A673 (cell line): ENCODE measurements at regions of chr15 and their contacts with region 1.

Region 1: DNA sequence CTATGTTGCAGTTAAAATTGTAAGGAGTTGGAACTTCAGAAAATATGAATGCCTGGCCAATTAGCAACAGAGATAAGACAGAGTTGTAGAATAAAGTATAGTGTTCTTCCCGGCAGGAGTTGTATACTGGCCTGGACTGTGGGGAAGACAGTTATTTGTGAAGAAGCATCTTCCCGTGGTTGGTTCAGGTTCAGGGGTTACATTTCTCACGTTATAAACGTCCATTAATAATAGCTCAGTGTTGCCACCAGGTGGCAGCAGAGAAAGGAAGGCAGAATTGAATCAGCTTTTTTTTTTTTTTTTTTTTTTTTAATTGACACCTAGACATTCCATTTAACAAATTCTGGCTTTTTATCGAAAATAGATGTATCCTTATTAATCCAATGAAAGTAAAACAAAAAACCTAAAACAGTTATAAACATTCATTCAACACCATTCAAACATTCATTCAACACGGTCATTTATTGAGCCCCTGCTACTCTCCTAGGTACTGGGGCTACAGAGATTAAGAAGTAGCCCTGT is 66.4 kb upstream of the NR2E3 start:
- DNase-seq: peak; percentile 68
- H3K4me3 ChIP-seq: no peak overlapping the region
- H3K27ac ChIP-seq: no peak overlapping the region
- H3K4me1 ChIP-seq: no peaks in the 10 kb centered on the region
- H3K27me3 ChIP-seq: no peaks in the 10 kb centered on the region
- CTCF ChIP-seq: peak; percentile 81

Region 2: DNA sequence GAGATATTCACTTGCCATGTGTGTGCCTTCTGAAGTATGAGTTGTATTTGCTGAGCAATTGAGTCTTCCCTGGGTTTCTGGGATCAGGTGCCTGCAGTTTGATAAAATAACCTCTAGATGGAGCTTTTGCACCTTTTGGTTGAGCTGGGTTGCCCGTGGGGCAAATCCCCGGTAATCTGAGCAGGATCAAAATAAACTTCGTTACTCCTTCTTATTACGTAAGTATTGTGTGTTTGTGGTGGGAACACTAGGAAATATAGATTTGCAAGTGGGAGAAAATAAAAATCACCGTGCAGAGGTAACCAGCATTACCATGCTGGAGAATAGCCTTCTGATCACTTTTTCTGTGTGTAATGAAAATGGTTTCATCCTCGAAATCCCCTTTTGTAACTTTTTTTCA is 210.9 kb before region 1 on chr15:
- CTCF ChIA-PET with region 1: interaction called, 10 read pairs
- POLR2A ChIA-PET with region 1: no interaction called
- intact Hi-C with region 1: no loop called
- DNase-seq: peak; percentile 50
- H3K4me3 ChIP-seq: no peak overlapping the region
- H3K27ac ChIP-seq: no peak overlapping the region
- H3K4me1 ChIP-seq: no peaks in the 10 kb centered on the region
- H3K27me3 ChIP-seq: peaks cover 37% of the 10 kb centered on the region
- CTCF ChIP-seq: peak; percentile 80

Region 3: DNA sequence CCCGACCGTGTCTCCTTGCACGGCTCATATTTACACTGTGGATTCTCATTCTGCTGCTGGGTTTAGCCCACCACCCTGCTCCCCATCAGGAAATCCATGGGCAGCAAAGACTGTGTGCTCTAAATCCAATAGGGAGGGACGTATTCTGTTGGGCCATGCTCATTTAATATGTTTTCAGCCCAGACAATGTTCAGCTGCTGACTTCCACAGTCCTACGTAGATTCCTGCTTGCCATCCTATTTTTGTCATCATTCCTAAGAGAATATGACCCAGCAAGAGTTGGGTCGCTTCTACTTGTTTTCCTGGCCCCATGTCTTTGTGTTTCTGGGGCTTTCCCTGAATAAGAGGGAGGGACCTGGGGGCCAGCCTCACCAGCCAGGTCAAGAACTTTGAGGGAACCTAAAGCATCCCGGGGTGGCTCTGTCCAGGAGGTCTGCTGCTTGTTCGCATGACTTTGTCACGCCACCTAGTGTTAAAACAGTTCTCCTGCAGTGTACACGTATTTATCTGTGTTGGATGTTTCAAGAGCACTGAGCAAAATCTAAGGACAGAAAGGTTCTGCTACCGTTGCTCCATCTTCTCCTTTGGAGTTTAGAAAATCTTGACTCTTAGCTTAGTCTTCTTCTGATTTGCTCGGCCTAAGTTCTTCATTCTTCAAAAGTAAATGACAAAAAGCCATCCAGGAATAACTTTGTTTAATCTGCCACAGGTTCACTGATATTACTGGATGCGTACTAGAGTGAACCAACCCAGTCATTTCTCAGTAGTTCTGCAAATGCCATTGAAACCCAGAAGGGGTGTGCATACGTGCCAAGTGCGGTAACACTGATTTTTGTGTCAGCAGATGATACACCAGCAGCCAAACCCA is 13.4 kb before region 1 on chr15:
- CTCF ChIA-PET with region 1: interaction called, 12 read pairs
- POLR2A ChIA-PET with region 1: no interaction called
- intact Hi-C with region 1: no loop called
- DNase-seq: peak; percentile 64
- H3K4me3 ChIP-seq: no peak overlapping the region
- H3K27ac ChIP-seq: no peak overlapping the region
- H3K4me1 ChIP-seq: no peaks in the 10 kb centered on the region
- H3K27me3 ChIP-seq: no peaks in the 10 kb centered on the region
- CTCF ChIP-seq: peak; percentile 85

Region 4: DNA sequence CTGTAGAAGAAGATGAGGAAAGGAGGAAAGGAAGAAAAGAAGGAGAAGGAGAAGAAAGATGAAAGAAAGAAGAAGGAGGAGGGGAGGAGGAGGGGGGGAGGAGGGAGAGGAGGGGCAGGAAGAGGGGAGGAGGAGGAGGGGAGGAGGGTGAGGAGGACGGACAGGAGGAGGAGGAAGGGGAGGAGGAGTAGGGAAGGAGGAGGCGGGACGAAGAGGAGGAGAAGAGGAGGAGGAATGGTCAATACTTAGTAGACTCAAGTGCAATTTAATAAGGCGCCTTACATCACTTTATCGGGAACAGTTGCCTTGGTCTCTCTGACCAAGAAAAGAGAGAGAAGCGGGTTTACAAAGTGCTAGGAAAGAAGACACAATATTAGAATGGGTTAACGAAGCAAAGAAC is 42.8 kb after region 1 on chr15:
- CTCF ChIA-PET with region 1: interaction called, 12 read pairs
- POLR2A ChIA-PET with region 1: no interaction called
- intact Hi-C with region 1: no loop called
- DNase-seq: no peak
- H3K4me3 ChIP-seq: no peak overlapping the region
- H3K27ac ChIP-seq: no peak overlapping the region
- H3K4me1 ChIP-seq: no peaks in the 10 kb centered on the region
- H3K27me3 ChIP-seq: no peaks in the 10 kb centered on the region
- CTCF ChIP-seq: no peak

Region 5: DNA sequence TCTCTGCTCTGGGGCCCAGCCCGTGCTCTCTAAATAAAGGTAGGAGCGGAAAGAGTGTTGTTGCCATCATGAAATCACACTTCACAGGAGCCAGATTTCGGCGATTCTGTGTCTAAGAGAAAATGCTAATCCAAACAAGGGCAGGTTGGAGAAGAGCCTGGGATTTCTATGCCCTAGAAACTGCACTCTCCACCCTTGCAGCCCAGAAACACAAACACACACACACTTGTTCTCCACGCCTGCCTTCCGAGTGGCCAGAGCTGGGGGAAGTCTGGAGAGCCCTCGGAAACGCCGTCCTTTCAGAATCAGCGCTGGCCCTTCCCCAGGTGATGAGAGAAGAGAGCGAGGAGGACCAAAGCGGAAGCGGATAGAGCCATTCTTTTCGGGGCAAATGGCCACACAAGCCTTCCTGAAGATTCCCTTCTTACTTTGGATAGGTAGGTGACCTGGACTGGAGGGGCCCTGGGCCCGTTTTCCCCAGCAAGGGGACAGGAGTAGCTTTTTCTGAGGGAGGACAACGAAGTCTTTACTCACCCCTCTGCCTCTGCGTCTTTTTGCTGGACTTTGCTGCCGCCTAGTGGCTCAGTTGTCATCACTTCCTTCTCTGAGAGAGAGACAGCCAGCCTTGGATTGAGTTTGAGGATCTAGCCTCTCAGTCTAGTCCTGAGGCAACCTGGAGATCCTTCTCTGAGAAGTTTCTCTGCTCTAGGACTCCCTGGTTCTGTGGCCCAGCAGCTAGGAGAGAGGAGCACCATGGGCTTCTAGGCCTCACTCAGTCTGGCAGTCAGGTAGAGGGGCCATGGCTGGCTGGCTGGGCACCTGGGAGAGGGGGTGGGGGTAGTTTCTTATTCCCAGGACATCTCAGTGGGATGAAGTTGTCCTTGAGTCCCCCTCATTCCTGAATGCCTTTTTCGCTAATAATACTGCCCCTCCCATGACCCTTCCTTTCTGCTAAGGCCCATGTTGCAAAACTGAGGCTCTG is 412.0 kb after region 1 on chr15:
- CTCF ChIA-PET with region 1: interaction called, 42 read pairs
- POLR2A ChIA-PET with region 1: interaction called, 19 read pairs
- intact Hi-C with region 1: no loop called
- DNase-seq: peak; percentile 88
- H3K4me3 ChIP-seq: peak overlapping the region; percentile 50
- H3K27ac ChIP-seq: no peak overlapping the region
- H3K4me1 ChIP-seq: peaks cover 5% of the 10 kb centered on the region
- H3K27me3 ChIP-seq: no peaks in the 10 kb centered on the region
- CTCF ChIP-seq: peak; percentile 88